ENCODE measurements at regions of chr1 and their contacts with region 1.

Region 1: GRCh38 chr1:8604041-8604945 is 213.1 kb downstream of the RERE start:
- DNase-seq: no peak
- H3K4me3 ChIP-seq: no peak overlapping the region
- H3K27ac ChIP-seq: no peak overlapping the region
- H3K4me1 ChIP-seq: no peaks in the 10 kb centered on the region; the same call in 1 of the 2 replicates
- H3K27me3 ChIP-seq: no peaks in the 10 kb centered on the region
- CTCF ChIP-seq: no peak

Region 2: GRCh38 chr1:8482979-8483391 is 121.3 kb before region 1 on chr1:
- CTCF ChIA-PET with region 1: interaction called, 14 read pairs
- POLR2A ChIA-PET with region 1: no interaction called
- intact Hi-C with region 1: no loop called
- DNase-seq: no peak
- H3K4me3 ChIP-seq: no peak overlapping the region
- H3K27ac ChIP-seq: no peak overlapping the region
- H3K4me1 ChIP-seq: no peaks in the 10 kb centered on the region
- H3K27me3 ChIP-seq: no peaks in the 10 kb centered on the region
- CTCF ChIP-seq: no peak

Region 3: DNA sequence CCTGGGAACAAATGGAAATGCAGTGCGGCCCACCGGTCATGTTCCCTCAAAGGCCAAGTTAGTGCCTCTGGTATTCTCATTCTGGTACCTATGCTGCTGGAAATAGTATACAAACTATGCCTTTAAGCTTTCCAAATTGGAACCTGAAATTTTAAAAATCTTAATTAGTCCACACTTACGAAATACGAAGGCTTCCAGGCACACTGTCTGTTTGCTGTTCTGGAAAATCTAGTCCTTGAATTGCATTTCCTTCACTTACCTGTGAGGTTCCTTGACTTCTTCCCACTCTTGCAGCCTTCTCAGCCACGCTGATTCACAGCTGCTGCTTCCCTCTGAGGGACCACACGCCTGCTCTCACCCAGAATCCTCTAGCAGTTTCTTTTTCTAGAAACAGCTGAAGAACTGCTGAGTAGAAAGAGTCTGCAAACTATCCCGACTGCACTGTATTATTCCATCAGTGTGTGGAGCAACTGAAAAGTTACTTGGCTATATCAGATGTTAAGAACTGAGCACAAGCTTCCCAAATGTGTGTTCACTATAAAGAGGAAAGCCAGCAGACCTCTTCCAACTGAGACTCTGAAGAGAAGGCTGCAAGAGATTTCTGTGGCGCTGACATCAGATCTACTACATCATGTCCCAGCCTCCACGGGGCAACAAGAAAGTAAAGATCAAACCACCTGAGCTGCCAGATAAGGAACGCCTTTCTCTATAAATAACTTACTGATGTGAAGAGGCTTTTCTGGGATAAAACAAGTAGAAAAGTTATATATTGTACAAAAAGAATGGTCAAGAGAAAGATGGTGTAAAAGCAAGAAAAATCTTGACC is 13.6 kb before region 1 on chr1:
- CTCF ChIA-PET with region 1: no interaction called
- POLR2A ChIA-PET with region 1: no interaction called
- intact Hi-C with region 1: no loop called
- DNase-seq: no peak
- H3K4me3 ChIP-seq: no peak overlapping the region
- H3K27ac ChIP-seq: no peak overlapping the region
- H3K4me1 ChIP-seq: no peaks in the 10 kb centered on the region
- H3K27me3 ChIP-seq: no peaks in the 10 kb centered on the region
- CTCF ChIP-seq: no peak

Region 4: DNA sequence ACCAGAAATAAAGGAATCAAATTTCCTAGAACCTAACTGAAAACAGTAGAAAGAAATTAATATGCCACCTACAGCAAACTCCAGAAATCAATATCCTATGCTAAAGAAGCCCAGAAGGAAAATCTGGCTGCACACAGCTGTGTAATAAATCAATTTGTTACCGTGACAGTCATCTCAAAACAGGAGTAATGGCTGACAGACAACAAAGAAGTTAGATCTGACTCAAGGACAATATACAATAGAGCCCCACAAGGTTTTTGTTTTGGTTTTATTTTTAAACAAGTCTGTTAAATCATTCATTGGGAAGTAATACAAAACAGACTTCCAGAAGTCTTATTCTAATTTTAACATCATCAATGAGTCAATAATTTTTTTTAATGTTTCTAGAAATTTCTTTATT is 44.7 kb after region 1 on chr1:
- CTCF ChIA-PET with region 1: no interaction called
- POLR2A ChIA-PET with region 1: no interaction called
- intact Hi-C with region 1: no loop called
- DNase-seq: no peak
- H3K4me3 ChIP-seq: no peak overlapping the region
- H3K27ac ChIP-seq: no peak overlapping the region
- H3K4me1 ChIP-seq: peaks cover 11% of the 10 kb centered on the region
- H3K27me3 ChIP-seq: no peaks in the 10 kb centered on the region
- CTCF ChIP-seq: no peak